Naive thymus-derived CD4-positive, alpha-beta T cell (primary cell): ENCODE measurements at regions of chr6 and their contacts with region 1.

Region 1: DNA sequence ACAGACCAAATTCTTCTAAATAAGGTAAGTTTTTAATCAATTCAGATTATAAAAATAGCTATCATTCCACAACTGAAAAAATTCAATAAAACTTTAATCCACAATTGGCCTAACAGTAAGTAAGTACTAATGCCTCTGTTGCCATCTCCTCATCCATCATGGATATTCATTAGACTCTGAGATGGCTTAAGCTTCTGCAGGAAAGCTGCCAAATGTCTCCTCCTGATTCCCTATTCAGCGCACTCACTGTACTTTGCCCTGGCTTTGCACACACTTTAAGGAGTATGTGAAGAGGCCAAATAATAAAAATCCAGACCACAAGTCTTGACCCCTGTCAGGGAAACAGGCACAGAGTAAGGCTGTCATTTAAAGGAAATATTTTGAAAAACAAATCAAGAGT is 23.6 kb downstream of the PGM3 start:
- DNase-seq: no peak
- ATAC-seq: no peak
- H3K4me3 ChIP-seq: no peak overlapping the region
- H3K4me3 Mint-ChIP-seq: no peak overlapping the region
- H3K27ac ChIP-seq: no peak overlapping the region
- H3K27ac Mint-ChIP-seq: peak overlapping the region in 2 of 9 donors; percentile 18 to 42
- H3K4me1 ChIP-seq: no peaks in the 10 kb centered on the region
- H3K4me1 Mint-ChIP-seq: peaks cover 0 to 3% (median 0%) of the 10 kb centered on the region in 7 donors
- H3K27me3 ChIP-seq: no peaks in the 10 kb centered on the region
- H3K27me3 Mint-ChIP-seq: no peaks in the 10 kb centered on the region

Region 2: GRCh38 chr6:82996156-82996555 is 173.4 kb before region 1 on chr6:
- CTCF ChIA-PET with region 1: no interaction called
- POLR2A ChIA-PET with region 1: no interaction called
- intact Hi-C with region 1: no loop called
- DNase-seq: no peak
- ATAC-seq: no peak
- H3K4me3 ChIP-seq: no peak overlapping the region
- H3K4me3 Mint-ChIP-seq: no peak overlapping the region
- H3K27ac ChIP-seq: no peak overlapping the region
- H3K27ac Mint-ChIP-seq: no peak overlapping the region
- H3K4me1 ChIP-seq: no peaks in the 10 kb centered on the region
- H3K4me1 Mint-ChIP-seq: peaks cover 0 to 8% (median 0%) of the 10 kb centered on the region in 7 donors
- H3K27me3 ChIP-seq: no peaks in the 10 kb centered on the region
- H3K27me3 Mint-ChIP-seq: no peaks in the 10 kb centered on the region

Region 3: DNA sequence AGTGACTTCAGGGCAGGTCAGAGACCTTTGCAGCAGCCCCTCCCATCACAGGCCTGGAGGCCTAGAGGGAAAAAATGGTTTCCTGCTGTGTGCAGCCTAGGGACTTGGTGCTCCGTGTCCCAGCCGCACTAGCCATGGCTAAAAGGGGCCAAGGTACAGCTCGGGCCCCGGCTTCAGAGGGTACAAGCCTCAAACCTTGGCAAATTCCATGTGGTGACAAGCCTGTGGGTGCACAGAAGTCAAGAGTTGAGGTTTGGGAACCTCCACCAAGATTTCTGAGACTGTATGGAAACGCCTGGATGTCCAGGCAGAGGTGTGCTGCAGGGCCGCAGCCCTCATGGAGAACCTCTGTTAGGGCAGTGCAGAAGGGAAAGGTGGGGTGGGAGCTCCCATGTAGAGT is 137.8 kb before region 1 on chr6:
- CTCF ChIA-PET with region 1: no interaction called
- POLR2A ChIA-PET with region 1: no interaction called
- intact Hi-C with region 1: no loop called
- DNase-seq: no peak
- ATAC-seq: no peak
- H3K4me3 ChIP-seq: no peak overlapping the region
- H3K4me3 Mint-ChIP-seq: no peak overlapping the region
- H3K27ac ChIP-seq: no peak overlapping the region
- H3K27ac Mint-ChIP-seq: no peak overlapping the region
- H3K4me1 ChIP-seq: no peaks in the 10 kb centered on the region
- H3K4me1 Mint-ChIP-seq: peaks cover 0 to 2% (median 0%) of the 10 kb centered on the region in 7 donors
- H3K27me3 ChIP-seq: no peaks in the 10 kb centered on the region
- H3K27me3 Mint-ChIP-seq: no peaks in the 10 kb centered on the region

Region 4: GRCh38 chr6:83183082-83183828 is 13.7 kb after region 1 on chr6:
- CTCF ChIA-PET with region 1: no interaction called
- POLR2A ChIA-PET with region 1: no interaction called
- intact Hi-C with region 1: no loop called
- DNase-seq: no peak
- ATAC-seq: no peak
- H3K4me3 ChIP-seq: no peak overlapping the region
- H3K4me3 Mint-ChIP-seq: no peak overlapping the region
- H3K27ac ChIP-seq: no peak overlapping the region
- H3K27ac Mint-ChIP-seq: peak overlapping the region in 2 of 9 donors; percentile 8 to 15
- H3K4me1 ChIP-seq: no peaks in the 10 kb centered on the region
- H3K4me1 Mint-ChIP-seq: peaks cover 0 to 34% (median 17%) of the 10 kb centered on the region in 7 donors
- H3K27me3 ChIP-seq: no peaks in the 10 kb centered on the region
- H3K27me3 Mint-ChIP-seq: no peaks in the 10 kb centered on the region

Region 5: DNA sequence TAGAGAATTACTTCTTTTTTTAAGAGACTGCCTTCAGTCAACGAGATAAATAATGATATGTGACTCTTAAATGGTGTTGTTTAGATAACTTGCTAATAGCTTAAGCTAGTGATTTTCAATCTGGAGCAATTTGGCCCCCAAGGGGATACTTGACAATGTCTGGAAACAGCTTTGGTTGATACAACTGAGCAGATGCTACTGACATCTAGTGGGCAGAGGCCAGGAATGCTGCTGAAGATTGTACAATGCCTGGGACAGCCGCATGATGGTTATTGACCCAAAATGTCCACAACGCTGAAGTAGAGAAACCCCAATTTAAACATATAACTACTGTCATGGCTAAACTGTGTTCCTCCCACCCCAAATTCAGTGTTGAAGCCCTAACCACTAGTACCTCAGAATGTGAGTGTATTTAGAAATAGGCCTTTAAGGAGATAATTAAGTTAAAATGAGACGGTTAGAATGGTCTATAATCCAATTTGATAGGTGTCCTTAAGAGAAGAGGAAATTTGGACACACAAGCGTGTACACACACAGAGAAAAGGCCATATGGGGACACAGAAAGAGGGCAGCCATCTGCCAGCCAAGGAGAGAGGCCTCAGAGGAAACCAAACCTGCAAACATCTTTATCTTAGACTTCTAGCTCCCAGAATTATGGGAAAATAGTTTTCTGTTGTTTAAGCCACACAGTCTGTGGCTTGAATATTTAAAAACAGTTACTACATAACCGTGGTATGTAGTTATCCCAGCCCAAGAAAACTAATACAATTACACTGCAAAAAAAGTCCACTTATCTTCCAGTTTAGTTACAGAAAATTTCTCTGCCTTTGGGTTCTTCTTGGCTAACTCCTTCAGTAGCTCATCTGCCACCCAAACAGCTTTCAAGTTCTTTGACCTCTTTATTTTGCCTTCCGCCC is 45.9 kb after region 1 on chr6:
- CTCF ChIA-PET with region 1: interaction called, 4 read pairs
- POLR2A ChIA-PET with region 1: no interaction called
- intact Hi-C with region 1: loop called in 1 of 2 experiments (anchors 2 kb)
- DNase-seq: peak; percentile 8 to 56 (median 38)
- ATAC-seq: peak; percentile 98
- H3K4me3 ChIP-seq: no peak overlapping the region
- H3K4me3 Mint-ChIP-seq: no peak overlapping the region
- H3K27ac ChIP-seq: no peak overlapping the region
- H3K27ac Mint-ChIP-seq: no peak overlapping the region
- H3K4me1 ChIP-seq: no peaks in the 10 kb centered on the region
- H3K4me1 Mint-ChIP-seq: no peaks in the 10 kb centered on the region
- H3K27me3 ChIP-seq: no peaks in the 10 kb centered on the region
- H3K27me3 Mint-ChIP-seq: peaks cover 8 to 29% (median 12%) of the 10 kb centered on the region in 5 donors